Ascending aorta (tissue), 2 donors: ENCODE measurements at regions of chr4 and their contacts with region 1.

Region 1: GRCh38 chr4:76949276-76950051 is at the start of gene SEPTIN11:
- DNase-seq: peak; percentile 73 to 97
- H3K4me3 ChIP-seq: peak within 1 kb of the TSS; percentile 59 to 77
- H3K27ac ChIP-seq: peak within 1 kb of the TSS; percentile 90 to 95
- H3K4me1 ChIP-seq: peaks cover 4 to 30% of the 10 kb centered on the region in 2 donors
- H3K27me3 ChIP-seq: no peaks in the 10 kb centered on the region
- CTCF ChIP-seq: no peak
- total RNA-seq, gene SEPTIN11: 48.0 TPM

Region 2: DNA sequence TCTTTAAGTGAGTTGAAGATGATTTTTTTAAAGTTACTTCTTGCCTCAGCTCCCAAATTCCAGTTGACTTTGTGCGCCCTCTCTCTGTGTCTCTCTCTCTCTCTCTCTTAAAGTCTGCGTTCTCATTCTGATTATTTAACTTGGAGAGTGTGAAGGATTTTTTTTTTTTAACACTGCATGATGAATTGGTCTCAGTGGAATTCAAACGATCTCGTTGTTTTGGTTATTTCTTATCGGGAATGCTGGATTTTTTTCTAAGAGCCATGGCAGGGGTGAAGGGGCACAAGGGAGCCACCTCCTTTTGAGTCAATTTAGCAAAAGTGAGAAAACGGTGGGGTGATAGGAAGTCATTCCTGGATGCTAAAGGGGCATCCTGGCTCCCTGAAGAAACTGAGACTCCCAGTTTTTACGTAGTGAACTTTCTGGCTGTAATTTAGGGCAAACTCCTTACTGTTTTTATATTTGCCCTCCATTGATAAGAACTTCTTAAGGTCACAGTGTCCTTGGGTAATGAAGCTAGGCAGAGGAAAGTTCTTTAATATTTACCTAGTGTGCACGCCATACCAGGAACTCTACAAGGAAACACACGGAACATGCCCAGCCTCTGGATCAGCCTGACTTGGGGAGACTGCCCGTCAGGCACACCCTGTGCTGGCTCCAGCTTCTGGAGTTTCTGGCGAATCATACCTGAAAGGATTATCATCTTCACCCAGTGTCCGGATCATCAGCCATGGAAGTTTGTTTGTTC is 338.1 kb before region 1 on chr4:
- intact Hi-C with region 1: loop called (anchors 10 kb)
- DNase-seq: peak in 1 of 2 donors; percentile 83
- H3K4me3 ChIP-seq: peak overlapping the region; percentile 28 to 41
- H3K27ac ChIP-seq: peak overlapping the region; percentile 78 to 85
- H3K4me1 ChIP-seq: peaks cover 15 to 67% of the 10 kb centered on the region in 2 donors
- H3K27me3 ChIP-seq: no peaks in the 10 kb centered on the region
- CTCF ChIP-seq: peak in 2 of 3 experiments; percentile 10 to 20

Region 3: GRCh38 chr4:76830964-76831703 is 118.3 kb before region 1 on chr4:
- intact Hi-C with region 1: loop called (anchors 5 kb)
- DNase-seq: peak in 1 of 2 donors; percentile 78
- H3K4me3 ChIP-seq: peak overlapping the region in 1 of 2 donors; percentile 8
- H3K27ac ChIP-seq: peak overlapping the region; percentile 73 to 84
- H3K4me1 ChIP-seq: peaks cover 3 to 21% of the 10 kb centered on the region in 2 donors
- H3K27me3 ChIP-seq: no peaks in the 10 kb centered on the region
- CTCF ChIP-seq: no peak

Region 4: DNA sequence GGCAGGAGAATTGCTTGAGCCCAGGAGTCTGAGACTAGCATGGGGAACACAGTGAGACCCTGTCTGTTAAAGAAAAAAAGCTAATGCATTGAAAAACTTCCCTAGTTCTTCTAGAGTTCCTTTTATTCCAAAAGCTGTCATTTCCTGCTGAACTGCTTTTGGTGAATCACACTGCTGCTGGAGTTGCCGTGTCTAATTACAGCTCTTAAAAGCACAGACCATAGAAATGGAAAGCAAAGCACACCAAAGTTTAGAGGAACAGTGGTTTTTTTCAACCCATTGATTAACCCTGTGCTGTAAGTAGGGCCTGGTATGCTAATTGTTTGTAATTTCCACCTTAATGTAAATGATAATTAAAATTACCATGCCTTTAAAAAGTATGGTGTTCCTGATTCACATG is 52.4 kb after region 1 on chr4:
- intact Hi-C with region 1: loop called (anchors 2 kb)
- DNase-seq: no peak
- H3K4me3 ChIP-seq: no peak overlapping the region
- H3K27ac ChIP-seq: peak overlapping the region; percentile 39 to 58
- H3K4me1 ChIP-seq: peaks cover 9 to 25% of the 10 kb centered on the region in 2 donors
- H3K27me3 ChIP-seq: no peaks in the 10 kb centered on the region
- CTCF ChIP-seq: no peak

Region 5: DNA sequence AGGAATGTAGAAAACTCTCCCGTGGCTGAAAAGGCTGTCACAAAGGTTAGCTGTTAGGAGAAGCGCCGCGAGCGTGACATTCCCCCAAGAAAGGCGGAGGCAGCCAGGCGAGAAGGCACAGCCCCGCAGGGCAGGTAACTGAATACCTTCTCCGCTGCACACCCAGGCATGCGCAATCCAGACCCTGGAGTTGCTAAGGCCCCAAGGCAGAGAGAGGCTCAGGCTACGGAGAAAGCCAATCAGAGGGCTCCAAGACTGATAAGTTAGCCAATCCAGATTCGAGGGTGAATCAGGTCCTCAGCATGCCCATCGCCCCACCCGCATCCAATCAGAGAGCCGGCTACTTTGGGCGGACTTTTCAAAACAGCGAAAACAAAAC is 207.1 kb after region 1 on chr4:
- intact Hi-C with region 1: loop called (anchors 1 kb)
- DNase-seq: peak; percentile 93 to 99
- H3K4me3 ChIP-seq: peak overlapping the region; percentile 96 to 98
- H3K27ac ChIP-seq: peak overlapping the region; percentile 92 to 97
- H3K4me1 ChIP-seq: peaks cover 0 to 7% of the 10 kb centered on the region in 2 donors
- H3K27me3 ChIP-seq: no peaks in the 10 kb centered on the region
- CTCF ChIP-seq: no peak

Region 6: GRCh38 chr4:77203380-77204197 is 254.1 kb after region 1 on chr4:
- intact Hi-C with region 1: loop called (anchors 5 kb)
- DNase-seq: peak in 1 of 2 donors; percentile 81
- H3K4me3 ChIP-seq: no peak overlapping the region
- H3K27ac ChIP-seq: no peak overlapping the region
- H3K4me1 ChIP-seq: no peaks in the 10 kb centered on the region
- H3K27me3 ChIP-seq: no peaks in the 10 kb centered on the region
- CTCF ChIP-seq: peak; percentile 61 to 76 (median 75)

Region 7: GRCh38 chr4:77862478-77863216 is 913.2 kb after region 1 on chr4 and contains the start of gene MRPL1:
- intact Hi-C with region 1: no loop called
- DNase-seq: peak; percentile 58 to 95
- H3K4me3 ChIP-seq: peak within 1 kb of the TSS; percentile 49 to 75
- H3K27ac ChIP-seq: peak within 1 kb of the TSS; percentile 99
- H3K4me1 ChIP-seq: peaks cover 2 to 6% of the 10 kb centered on the region in 2 donors
- H3K27me3 ChIP-seq: no peaks in the 10 kb centered on the region
- CTCF ChIP-seq: no peak
- total RNA-seq, gene MRPL1: 6.2 TPM